Activated CD8-positive, alpha-beta memory T cell treated with anti-CD3 and anti-CD28 coated beads, Interleukin-2, amount 10 ng/mL, durations not matched to agents 7 days and 5 days (primary cell): ENCODE measurements at regions of chr3 and their contacts with region 1.

Region 1: DNA sequence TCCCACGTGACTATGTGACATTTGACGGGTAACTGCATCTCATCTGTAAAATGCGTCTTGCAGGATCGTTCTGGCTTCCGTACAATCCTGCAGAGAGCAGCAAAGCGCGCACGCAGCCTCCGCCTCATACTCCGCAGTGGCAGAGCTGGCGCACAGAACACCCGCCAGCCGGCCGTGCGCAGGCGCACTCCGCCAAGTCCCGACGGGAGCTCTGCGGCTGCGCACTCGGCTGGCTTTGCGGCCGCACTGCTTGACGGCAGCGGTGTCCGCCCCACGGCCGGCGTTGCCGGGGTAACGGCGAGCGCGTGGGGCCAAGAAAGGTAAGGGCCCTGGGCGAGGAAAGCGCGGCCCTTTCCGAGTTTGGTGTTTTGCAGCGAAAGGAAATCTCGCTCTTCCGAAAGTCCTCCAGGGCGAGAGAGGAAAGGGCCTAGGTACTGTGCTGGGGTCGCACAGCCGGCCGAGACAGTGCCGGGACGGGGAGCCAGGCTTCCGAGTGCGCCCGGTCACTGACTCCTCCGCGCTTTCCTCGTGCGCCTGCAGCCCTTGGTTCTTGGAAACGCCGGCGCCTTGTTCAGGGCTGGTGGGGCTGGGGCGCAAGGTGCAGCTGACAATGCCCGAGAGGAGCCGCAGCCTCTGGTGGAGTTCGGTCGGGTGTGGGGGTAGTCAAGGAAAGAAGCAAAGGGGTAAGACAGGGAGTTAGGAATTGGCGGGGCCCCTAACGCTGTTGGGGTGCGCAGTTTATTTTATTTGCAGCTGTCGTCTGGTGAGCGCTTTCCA is at the start of gene TSEN2:
- DNase-seq: peak; percentile 97
- ATAC-seq: peak; percentile 98
- H3K4me3 Mint-ChIP-seq: peak within 1 kb of the TSS; percentile 95
- H3K27ac Mint-ChIP-seq: peak within 1 kb of the TSS; percentile 92
- H3K4me1 Mint-ChIP-seq: peaks cover 31% of the 10 kb centered on the region
- H3K27me3 Mint-ChIP-seq: no peaks in the 10 kb centered on the region
- total RNA-seq, gene TSEN2: 12.6 to 13.0 TPM

Region 2: GRCh38 chr3:12471243-12471651 is 13.1 kb before region 1 on chr3:
- CTCF ChIA-PET with region 1: interaction called, 13 read pairs
- DNase-seq: peak; percentile 63
- ATAC-seq: peak; percentile 76
- H3K4me3 Mint-ChIP-seq: no peak overlapping the region
- H3K27ac Mint-ChIP-seq: peak overlapping the region; percentile 42
- H3K4me1 Mint-ChIP-seq: peaks cover 22% of the 10 kb centered on the region
- H3K27me3 Mint-ChIP-seq: no peaks in the 10 kb centered on the region

Region 3: DNA sequence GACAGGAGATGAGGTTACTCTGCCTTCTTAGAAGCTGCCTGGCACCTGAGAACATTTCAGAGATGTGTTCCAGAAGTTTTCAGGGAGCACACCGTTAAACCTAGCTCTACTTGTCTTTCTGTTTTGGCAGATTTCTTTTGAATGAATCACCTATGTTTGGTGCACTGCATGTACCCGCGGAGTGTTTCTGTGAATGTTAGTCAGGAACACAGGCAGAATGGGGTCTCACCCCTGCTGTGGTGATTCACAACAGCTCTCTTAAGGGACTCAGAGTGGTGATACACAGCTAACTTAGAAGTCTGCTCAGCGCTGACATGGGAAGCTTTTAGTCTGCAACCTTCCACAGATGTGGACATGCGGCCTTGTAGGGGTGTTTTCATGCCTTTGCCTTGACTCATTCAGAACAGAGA is 23.9 kb after region 1 on chr3:
- CTCF ChIA-PET with region 1: no interaction called
- DNase-seq: no peak
- ATAC-seq: no peak
- H3K4me3 Mint-ChIP-seq: no peak overlapping the region
- H3K27ac Mint-ChIP-seq: no peak overlapping the region
- H3K4me1 Mint-ChIP-seq: no peaks in the 10 kb centered on the region
- H3K27me3 Mint-ChIP-seq: no peaks in the 10 kb centered on the region

Region 4: GRCh38 chr3:12545300-12545791 is 61.0 kb after region 1 on chr3 and contains the start of gene MKRN2OS:
- CTCF ChIA-PET with region 1: no interaction called
- DNase-seq: no peak
- ATAC-seq: no peak
- H3K4me3 Mint-ChIP-seq: no peak within 1 kb of the TSS
- H3K27ac Mint-ChIP-seq: no peak within 1 kb of the TSS
- H3K4me1 Mint-ChIP-seq: peaks cover 5% of the 10 kb centered on the region
- H3K27me3 Mint-ChIP-seq: peaks cover 7% of the 10 kb centered on the region
- total RNA-seq, gene MKRN2OS: not detected

Region 5: GRCh38 chr3:13245615-13245978 is 761.2 kb after region 1 on chr3:
- CTCF ChIA-PET with region 1: no interaction called
- DNase-seq: no peak
- ATAC-seq: no peak
- H3K4me3 Mint-ChIP-seq: no peak overlapping the region
- H3K27ac Mint-ChIP-seq: no peak overlapping the region
- H3K4me1 Mint-ChIP-seq: peaks cover 4% of the 10 kb centered on the region
- H3K27me3 Mint-ChIP-seq: peaks cover 14% of the 10 kb centered on the region